Dendritic cell treated with granulocyte-macrophage colony-stimulating factor and Interleukin-4, amounts not matched to agents 40 ng/mL and 50 ng/mL, for 4 days (primary cell): ENCODE measurements at regions of chr3 and their contacts with region 1.

Region 1: DNA sequence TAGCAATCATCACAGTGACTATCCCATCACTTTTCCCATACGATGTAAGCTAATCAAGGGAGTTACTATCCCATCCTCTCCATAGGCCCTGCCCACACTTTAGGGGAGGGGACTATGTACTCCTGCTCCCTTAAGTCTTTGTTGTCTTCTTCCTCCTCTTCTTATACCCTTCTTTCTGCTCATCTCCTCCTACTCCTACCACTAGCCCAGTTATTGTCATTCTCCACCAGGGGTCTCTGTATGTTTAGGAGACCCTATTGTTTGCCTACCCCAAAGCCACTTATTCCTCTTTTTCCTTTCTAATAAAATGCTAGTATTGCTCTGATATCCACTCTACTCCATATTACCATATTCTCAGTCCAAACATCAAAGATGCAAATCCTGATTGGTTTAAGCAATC is 27.8 kb downstream of the STAC start:
- H3K4me3 Mint-ChIP-seq: no peak overlapping the region
- H3K27ac Mint-ChIP-seq: peak overlapping the region; percentile 2
- H3K4me1 Mint-ChIP-seq: peaks cover 30% of the 10 kb centered on the region
- H3K27me3 Mint-ChIP-seq: no peaks in the 10 kb centered on the region

Region 2: GRCh38 chr3:35760146-35760545 is 648.0 kb before region 1 on chr3:
- intact Hi-C with region 1: no loop called
- H3K4me3 Mint-ChIP-seq: no peak overlapping the region
- H3K27ac Mint-ChIP-seq: no peak overlapping the region
- H3K4me1 Mint-ChIP-seq: no peaks in the 10 kb centered on the region
- H3K27me3 Mint-ChIP-seq: no peaks in the 10 kb centered on the region

Region 3: DNA sequence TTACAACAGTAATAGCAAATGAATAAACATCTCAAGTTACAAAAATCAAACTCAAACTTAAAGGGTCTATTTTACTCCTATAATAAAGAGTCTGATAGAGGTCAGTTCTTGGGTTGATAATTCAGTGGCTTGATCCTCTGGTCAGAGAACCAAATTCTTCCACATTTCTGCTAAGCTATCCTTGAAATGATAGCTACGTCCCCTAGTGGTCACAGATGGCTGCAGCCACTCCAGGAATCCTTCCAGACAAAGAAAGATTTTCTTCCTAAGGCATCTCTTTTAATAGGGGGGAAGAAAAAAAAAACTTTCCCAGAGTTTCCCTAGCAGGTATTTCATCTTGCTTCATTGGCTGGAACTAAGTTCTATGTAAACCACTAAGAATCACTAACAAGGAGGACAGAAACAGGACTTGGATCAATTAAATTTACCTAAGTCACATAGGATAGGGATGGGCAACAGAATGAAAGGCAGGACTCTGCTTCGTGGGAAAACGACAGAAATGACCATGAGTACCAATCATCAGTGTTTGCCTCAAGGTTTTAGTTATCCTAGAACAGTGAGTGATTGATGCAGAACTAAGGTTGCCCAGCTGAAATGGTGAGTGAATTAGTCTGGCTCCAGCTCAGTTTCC is 132.9 kb after region 1 on chr3:
- intact Hi-C with region 1: loop called (anchors 5 kb)
- H3K4me3 Mint-ChIP-seq: no peak overlapping the region
- H3K27ac Mint-ChIP-seq: no peak overlapping the region
- H3K4me1 Mint-ChIP-seq: peaks cover 31% of the 10 kb centered on the region
- H3K27me3 Mint-ChIP-seq: peaks cover 4% of the 10 kb centered on the region

Region 4: DNA sequence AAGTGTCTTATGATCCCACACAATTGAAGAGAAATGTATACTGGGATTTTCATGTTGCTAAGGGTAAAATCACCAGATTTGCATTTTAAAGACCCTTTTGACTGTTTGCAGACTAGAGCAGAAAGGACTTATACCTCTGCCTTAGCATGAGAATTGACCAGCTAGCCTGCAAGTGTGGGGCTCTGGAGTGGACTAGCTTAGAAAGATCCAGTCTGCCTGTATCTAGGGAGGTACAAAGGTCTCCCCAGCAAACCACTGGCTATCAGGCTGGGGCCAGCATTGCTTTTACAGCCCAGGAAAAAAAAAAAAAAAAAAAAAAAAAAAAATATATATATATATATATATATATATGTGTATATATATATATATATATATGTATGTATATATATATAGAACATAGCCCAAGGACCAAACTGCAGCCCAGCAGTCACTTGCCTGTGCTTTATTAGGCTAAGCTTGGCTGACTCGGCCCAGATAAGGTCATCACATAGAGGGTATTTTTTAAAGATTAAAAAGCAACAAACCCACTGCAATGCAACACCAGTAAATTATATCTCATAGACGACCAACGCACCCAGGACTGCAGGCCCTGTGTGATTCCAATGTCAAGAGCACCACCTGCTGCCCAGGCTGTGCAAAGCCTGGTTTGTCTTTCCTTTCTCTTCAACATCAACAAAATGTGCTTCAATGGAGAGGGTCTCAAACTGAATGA is 292.5 kb after region 1 on chr3:
- intact Hi-C with region 1: loop called (anchors 10 kb)
- H3K4me3 Mint-ChIP-seq: no peak overlapping the region
- H3K27ac Mint-ChIP-seq: no peak overlapping the region
- H3K4me1 Mint-ChIP-seq: no peaks in the 10 kb centered on the region
- H3K27me3 Mint-ChIP-seq: no peaks in the 10 kb centered on the region